Common myeloid progenitor, CD34-positive (primary cell): ENCODE measurements at regions of chr11 and their contacts with region 1.

Region 1: DNA sequence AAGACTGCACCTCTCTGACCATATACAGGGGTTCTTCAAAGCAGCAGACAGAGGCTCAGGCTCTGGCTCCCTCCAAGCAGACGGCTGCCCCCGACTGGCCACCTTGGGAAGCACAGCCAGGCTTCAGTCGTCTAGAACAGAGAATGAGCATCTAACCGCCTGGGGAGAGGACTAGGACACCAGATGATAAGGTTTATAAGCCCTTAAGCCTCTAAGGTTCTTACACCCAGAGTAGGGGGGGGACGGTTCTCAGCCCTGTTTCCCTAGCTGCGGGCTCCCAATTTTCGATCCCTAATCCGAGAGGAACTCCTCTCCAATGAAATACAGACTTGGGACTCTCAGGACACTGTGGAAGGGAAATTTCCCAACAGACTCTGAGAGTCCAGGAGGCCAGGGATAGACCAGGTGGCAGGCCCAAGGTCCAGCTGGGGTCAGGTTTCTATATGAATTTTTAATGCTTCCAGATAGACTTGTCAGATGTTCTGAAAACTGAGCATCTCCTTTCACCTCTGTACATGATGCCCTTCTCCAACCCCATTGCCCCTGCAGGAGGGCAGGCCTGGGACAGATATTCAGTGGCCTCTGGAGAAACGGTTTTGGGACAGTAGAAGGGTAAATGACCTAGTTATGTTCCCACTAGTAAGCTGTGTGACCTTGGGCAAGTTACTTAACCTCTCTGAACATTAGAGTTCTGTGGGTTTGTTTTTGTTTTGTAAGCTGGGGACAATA is 20.2 kb downstream of the RTN4RL2 start:
- DNase-seq: peak in 2 of 3 donors; percentile 72 to 73
- H3K4me3 ChIP-seq: no peak overlapping the region
- H3K27ac ChIP-seq: no peak overlapping the region
- H3K4me1 ChIP-seq: peaks cover 18 to 62% (median 55%) of the 10 kb centered on the region in 4 experiments
- H3K27me3 ChIP-seq: peaks cover 0 to 4% (median 0%) of the 10 kb centered on the region in 5 experiments

Region 2: DNA sequence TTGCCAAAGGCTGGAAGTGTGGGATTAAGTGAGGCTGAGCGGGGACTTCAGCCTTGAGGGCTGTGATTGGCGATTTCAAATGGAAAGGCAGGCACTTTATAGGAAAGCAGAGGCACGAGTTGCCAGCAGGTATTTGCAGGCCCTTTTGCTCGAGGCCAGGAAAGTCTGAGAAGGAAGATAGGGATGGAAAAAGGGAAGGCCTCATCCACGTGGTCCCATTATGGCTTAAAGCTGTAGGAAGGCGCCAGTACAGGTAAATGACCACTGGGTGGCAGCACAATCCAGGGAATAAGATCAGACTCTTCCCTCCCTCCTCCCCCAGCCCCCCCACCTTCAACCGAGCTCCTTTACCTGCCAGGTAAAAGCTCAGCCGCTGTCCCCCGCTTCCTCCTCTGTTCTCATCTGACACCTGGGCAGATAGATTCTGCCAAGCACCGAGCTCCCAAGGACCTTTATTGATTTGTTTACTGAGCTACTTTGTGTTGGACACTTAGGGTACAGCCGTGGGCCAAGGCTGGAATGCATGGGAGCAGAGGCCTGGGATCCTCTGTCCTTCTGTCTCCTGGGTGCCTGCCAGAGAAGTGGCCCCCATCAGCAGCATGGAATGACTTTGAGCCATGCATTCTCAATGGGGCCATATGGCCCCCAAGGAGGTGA is 134.9 kb before region 1 on chr11:
- CTCF ChIA-PET with region 1: interaction called, 17 read pairs
- POLR2A ChIA-PET with region 1: no interaction called
- DNase-seq: peak; percentile 60 to 71 (median 61)
- H3K4me3 ChIP-seq: no peak overlapping the region
- H3K27ac ChIP-seq: no peak overlapping the region
- H3K4me1 ChIP-seq: peaks cover 0 to 11% (median 2%) of the 10 kb centered on the region in 4 experiments
- H3K27me3 ChIP-seq: no peaks in the 10 kb centered on the region

Region 3: DNA sequence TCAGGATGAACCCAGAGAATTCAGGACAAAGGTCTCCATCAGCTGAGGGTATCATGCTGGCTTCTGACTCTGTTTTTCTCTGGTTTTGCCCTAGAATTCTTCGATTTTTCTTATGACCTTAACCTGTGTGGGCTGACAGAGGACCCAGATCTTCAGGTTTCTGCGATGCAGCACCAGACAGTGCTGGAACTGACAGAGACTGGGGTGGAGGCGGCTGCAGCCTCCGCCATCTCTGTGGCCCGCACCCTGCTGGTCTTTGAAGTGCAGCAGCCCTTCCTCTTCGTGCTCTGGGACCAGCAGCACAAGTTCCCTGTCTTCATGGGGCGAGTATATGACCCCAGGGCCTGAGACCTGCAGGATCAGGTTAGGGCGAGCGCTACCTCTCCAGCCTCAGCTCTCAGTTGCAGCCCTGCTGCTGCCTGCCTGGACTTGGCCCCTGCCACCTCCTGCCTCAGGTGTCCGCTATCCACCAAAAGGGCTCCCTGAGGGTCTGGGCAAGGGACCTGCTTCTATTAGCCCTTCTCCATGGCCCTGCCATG is 133.7 kb after region 1 on chr11:
- CTCF ChIA-PET with region 1: no interaction called
- POLR2A ChIA-PET with region 1: no interaction called
- DNase-seq: no peak
- H3K4me3 ChIP-seq: no peak overlapping the region
- H3K27ac ChIP-seq: no peak overlapping the region
- H3K4me1 ChIP-seq: no peaks in the 10 kb centered on the region
- H3K27me3 ChIP-seq: no peaks in the 10 kb centered on the region

Region 4: DNA sequence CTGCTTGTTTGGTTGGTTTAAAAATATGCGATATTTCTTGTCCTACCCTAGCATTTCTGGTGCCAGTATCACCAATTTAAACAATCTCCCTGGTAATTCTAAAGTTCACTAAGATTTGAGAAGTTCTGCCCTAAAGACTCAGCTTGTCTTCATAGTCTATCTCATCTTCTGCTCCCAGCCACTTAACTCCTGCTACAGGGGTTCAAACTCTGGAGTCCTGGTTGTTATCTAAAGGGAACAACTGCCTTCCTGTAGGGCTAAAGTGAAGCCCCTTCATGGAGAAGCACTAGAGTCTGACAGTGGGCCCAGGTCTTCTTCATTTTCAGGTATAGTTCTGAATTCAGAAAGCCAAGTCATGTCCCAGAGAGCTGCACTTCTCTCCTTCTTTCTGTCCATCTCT is 354.3 kb after region 1 on chr11:
- CTCF ChIA-PET with region 1: no interaction called
- POLR2A ChIA-PET with region 1: no interaction called
- DNase-seq: no peak
- H3K4me3 ChIP-seq: no peak overlapping the region
- H3K27ac ChIP-seq: no peak overlapping the region
- H3K4me1 ChIP-seq: no peaks in the 10 kb centered on the region
- H3K27me3 ChIP-seq: peaks cover 0 to 7% (median 0%) of the 10 kb centered on the region in 5 experiments